CD8-positive, alpha-beta T cell (primary cell): ENCODE measurements at regions of chr5 and their contacts with region 1.

Region 1: GRCh38 chr5:139422307-139422893 is 16.9 kb downstream of the DNAJC18 start:
- DNase-seq: peak in 8 of 9 experiments; percentile 15 to 86 (median 52)
- ATAC-seq: peak; percentile 99
- H3K4me3 ChIP-seq: no peak overlapping the region
- H3K4me3 Mint-ChIP-seq: no peak overlapping the region
- H3K27ac ChIP-seq: no peak overlapping the region
- H3K27ac Mint-ChIP-seq: no peak overlapping the region
- H3K4me1 ChIP-seq: no peaks in the 10 kb centered on the region
- H3K4me1 Mint-ChIP-seq: peaks cover 5% of the 10 kb centered on the region
- H3K27me3 ChIP-seq: no peaks in the 10 kb centered on the region
- H3K27me3 Mint-ChIP-seq: no peaks in the 10 kb centered on the region
- CTCF ChIP-seq: peak; percentile 89

Region 2: DNA sequence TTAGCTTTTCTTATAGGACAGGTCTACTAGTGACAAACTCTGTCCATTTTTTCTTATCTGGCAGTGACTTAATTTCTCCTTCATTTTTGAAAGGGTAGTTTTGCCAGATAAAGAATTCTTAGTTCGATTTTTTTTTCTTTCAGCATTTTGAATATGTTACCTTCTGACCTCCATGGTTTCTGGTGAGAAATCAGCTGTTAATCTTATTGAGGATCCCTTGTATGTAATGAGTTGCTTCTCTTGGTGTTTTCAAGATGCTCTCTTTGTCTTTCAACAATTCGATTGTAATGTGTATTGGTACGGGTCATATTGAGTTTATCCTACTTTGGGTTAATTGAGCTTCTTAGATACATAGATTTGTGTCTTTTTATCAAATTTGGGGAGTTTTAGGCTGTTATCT is 68.2 kb before region 1 on chr5:
- CTCF ChIA-PET with region 1: no interaction called
- POLR2A ChIA-PET with region 1: no interaction called
- intact Hi-C with region 1: no loop called
- DNase-seq: no peak
- ATAC-seq: no peak
- H3K4me3 ChIP-seq: no peak overlapping the region
- H3K4me3 Mint-ChIP-seq: no peak overlapping the region
- H3K27ac ChIP-seq: no peak overlapping the region
- H3K27ac Mint-ChIP-seq: no peak overlapping the region
- H3K4me1 ChIP-seq: peaks cover 9% of the 10 kb centered on the region
- H3K4me1 Mint-ChIP-seq: peaks cover 62% of the 10 kb centered on the region
- H3K27me3 ChIP-seq: no peaks in the 10 kb centered on the region
- H3K27me3 Mint-ChIP-seq: no peaks in the 10 kb centered on the region
- CTCF ChIP-seq: no peak

Region 3: DNA sequence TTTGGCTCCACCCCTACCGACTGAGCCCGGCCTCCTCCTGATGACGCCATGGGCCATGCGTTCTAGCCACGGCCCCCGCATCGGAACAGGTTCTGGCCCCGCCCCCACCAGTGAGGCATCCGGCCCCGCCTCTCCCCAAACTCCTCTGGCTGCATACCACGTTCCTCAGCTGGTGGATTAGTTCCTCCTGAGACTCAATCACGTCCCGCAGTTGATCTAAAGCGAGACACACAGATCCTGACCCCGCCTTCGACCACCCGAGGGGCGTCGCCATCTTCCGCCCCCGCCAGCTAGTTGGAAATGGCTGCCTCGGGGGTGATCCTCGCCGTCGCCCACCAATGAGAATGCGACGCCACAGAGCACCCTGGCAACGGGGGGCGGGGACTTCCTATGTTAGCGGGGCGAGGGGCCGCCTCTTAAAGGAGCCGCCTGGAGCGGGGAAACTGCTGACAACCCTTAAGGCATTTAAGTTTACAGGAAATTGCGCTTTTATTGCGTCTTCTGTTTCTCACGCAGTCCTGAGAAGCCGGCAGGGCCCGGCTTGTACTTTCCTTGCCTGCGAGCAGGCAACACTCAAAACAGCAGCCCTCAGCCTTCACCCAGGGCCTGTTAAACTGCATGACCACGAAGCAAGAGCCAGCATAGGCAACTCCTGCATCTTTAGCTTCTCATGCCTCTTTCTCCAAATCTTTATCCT is 18.5 kb before region 1 on chr5 and contains the start of gene SPATA24:
- CTCF ChIA-PET with region 1: interaction called, 46 read pairs
- POLR2A ChIA-PET with region 1: interaction called, 4 read pairs
- intact Hi-C with region 1: no loop called
- DNase-seq: peak; percentile 93 to 99 (median 98)
- ATAC-seq: peak; percentile 88
- H3K4me3 ChIP-seq: peak within 1 kb of the TSS; percentile 61
- H3K4me3 Mint-ChIP-seq: peak within 1 kb of the TSS; percentile 95
- H3K27ac ChIP-seq: peak within 1 kb of the TSS; percentile 68 to 94
- H3K27ac Mint-ChIP-seq: peak within 1 kb of the TSS; percentile 99
- H3K4me1 ChIP-seq: peaks cover 16% of the 10 kb centered on the region
- H3K4me1 Mint-ChIP-seq: peaks cover 32% of the 10 kb centered on the region
- H3K27me3 ChIP-seq: no peaks in the 10 kb centered on the region
- H3K27me3 Mint-ChIP-seq: no peaks in the 10 kb centered on the region
- CTCF ChIP-seq: no peak
- total RNA-seq, gene SPATA24: 2.2 to 3.0 TPM

Region 4: GRCh38 chr5:139446956-139447779 is 24.8 kb after region 1 on chr5:
- CTCF ChIA-PET with region 1: interaction called, 64 read pairs
- POLR2A ChIA-PET with region 1: no interaction called
- intact Hi-C with region 1: no loop called
- DNase-seq: peak in 1 of 9 experiments; percentile 18
- ATAC-seq: no peak
- H3K4me3 ChIP-seq: no peak overlapping the region
- H3K4me3 Mint-ChIP-seq: no peak overlapping the region
- H3K27ac ChIP-seq: no peak overlapping the region
- H3K27ac Mint-ChIP-seq: no peak overlapping the region
- H3K4me1 ChIP-seq: peaks cover 26% of the 10 kb centered on the region
- H3K4me1 Mint-ChIP-seq: peaks cover 21% of the 10 kb centered on the region
- H3K27me3 ChIP-seq: no peaks in the 10 kb centered on the region
- H3K27me3 Mint-ChIP-seq: no peaks in the 10 kb centered on the region
- CTCF ChIP-seq: no peak

Region 5: GRCh38 chr5:139474890-139475791 is 52.7 kb after region 1 on chr5:
- CTCF ChIA-PET with region 1: interaction called, 10 read pairs
- POLR2A ChIA-PET with region 1: interaction called, 3 read pairs
- intact Hi-C with region 1: no loop called
- DNase-seq: peak in 3 of 9 experiments; percentile 25 to 60 (median 39)
- ATAC-seq: peak; percentile 66
- H3K4me3 ChIP-seq: no peak overlapping the region
- H3K4me3 Mint-ChIP-seq: peak overlapping the region; percentile 68
- H3K27ac ChIP-seq: peak overlapping the region in 1 of 2 experiments; percentile 36
- H3K27ac Mint-ChIP-seq: peak overlapping the region; percentile 82
- H3K4me1 ChIP-seq: peaks cover 67% of the 10 kb centered on the region
- H3K4me1 Mint-ChIP-seq: peaks cover 66% of the 10 kb centered on the region
- H3K27me3 ChIP-seq: no peaks in the 10 kb centered on the region
- H3K27me3 Mint-ChIP-seq: no peaks in the 10 kb centered on the region
- CTCF ChIP-seq: no peak

Region 6: DNA sequence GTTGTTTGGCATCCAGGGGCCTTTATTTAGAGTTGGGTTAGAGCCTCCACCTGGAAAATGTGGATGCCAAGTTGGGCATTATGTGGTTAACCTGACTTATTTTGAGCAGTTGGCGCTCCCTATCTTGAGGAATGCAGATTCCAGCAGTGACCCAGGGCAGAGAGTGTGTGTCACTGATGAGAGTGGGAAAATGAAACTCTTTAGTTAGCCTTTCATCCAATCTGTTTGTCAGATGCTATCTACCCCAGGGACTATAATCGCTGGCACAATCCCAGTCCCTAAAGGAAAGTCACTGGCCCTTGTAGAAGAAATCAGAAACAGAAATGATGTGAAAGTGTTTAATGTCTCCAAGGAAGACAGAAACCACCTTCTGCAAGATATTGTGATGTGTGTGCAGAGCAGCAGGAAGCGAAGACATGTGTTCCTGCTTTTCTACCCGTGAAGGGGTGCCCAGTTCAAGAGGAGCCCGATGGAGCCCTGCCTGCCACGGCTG is 70.3 kb after region 1 on chr5:
- CTCF ChIA-PET with region 1: interaction called, 19 read pairs
- POLR2A ChIA-PET with region 1: no interaction called
- intact Hi-C with region 1: no loop called
- DNase-seq: no peak
- ATAC-seq: peak; percentile 29
- H3K4me3 ChIP-seq: no peak overlapping the region
- H3K4me3 Mint-ChIP-seq: peak overlapping the region; percentile 58
- H3K27ac ChIP-seq: no peak overlapping the region
- H3K27ac Mint-ChIP-seq: no peak overlapping the region
- H3K4me1 ChIP-seq: peaks cover 9% of the 10 kb centered on the region
- H3K4me1 Mint-ChIP-seq: peaks cover 23% of the 10 kb centered on the region
- H3K27me3 ChIP-seq: no peaks in the 10 kb centered on the region
- H3K27me3 Mint-ChIP-seq: no peaks in the 10 kb centered on the region
- CTCF ChIP-seq: no peak

Region 7: DNA sequence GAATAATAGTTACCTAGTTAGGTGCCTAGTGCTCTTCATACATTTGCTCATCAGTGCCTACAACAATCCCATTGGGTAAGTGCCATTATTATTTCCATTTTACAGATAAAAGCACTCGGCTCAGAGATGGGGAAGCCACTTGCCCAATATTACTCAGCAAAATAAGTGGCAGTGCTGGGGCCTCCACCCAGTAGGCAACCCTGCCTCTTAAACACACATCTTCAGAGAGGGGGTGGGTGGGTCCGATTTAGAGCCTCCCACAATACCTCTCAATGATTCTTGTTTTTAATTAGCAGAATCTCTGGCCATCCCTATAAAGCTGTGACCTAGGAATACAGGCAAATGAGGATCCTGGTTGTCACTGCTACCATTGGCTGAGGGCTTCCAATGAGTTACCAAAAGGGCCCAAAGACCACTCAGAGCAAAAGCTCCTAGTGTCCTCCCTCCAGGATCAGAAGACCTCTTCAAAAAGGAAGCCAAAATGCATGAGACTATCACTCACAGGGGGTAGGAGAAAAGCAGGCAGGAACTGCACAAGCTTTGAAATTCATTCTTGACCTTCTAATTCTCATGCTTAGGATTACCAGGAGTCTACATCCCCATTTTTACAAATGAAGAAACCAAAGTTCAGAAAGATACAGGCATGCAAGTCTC is 102.7 kb after region 1 on chr5:
- CTCF ChIA-PET with region 1: interaction called, 473 read pairs
- POLR2A ChIA-PET with region 1: no interaction called
- intact Hi-C with region 1: no loop called
- DNase-seq: no peak
- ATAC-seq: no peak
- H3K4me3 ChIP-seq: no peak overlapping the region
- H3K4me3 Mint-ChIP-seq: no peak overlapping the region
- H3K27ac ChIP-seq: no peak overlapping the region
- H3K27ac Mint-ChIP-seq: no peak overlapping the region
- H3K4me1 ChIP-seq: no peaks in the 10 kb centered on the region
- H3K4me1 Mint-ChIP-seq: no peaks in the 10 kb centered on the region
- H3K27me3 ChIP-seq: no peaks in the 10 kb centered on the region
- H3K27me3 Mint-ChIP-seq: no peaks in the 10 kb centered on the region
- CTCF ChIP-seq: no peak

Region 8: GRCh38 chr5:139690064-139690802 is 267.8 kb after region 1 on chr5:
- CTCF ChIA-PET with region 1: interaction called, 11 read pairs
- POLR2A ChIA-PET with region 1: no interaction called
- intact Hi-C with region 1: loop called in 1 of 2 experiments (anchors 2 kb)
- DNase-seq: peak in 4 of 9 experiments; percentile 22 to 64 (median 38)
- ATAC-seq: peak; percentile 77
- H3K4me3 ChIP-seq: no peak overlapping the region
- H3K4me3 Mint-ChIP-seq: no peak overlapping the region
- H3K27ac ChIP-seq: no peak overlapping the region
- H3K27ac Mint-ChIP-seq: no peak overlapping the region
- H3K4me1 ChIP-seq: peaks cover 6% of the 10 kb centered on the region
- H3K4me1 Mint-ChIP-seq: peaks cover 19% of the 10 kb centered on the region
- H3K27me3 ChIP-seq: no peaks in the 10 kb centered on the region
- H3K27me3 Mint-ChIP-seq: no peaks in the 10 kb centered on the region
- CTCF ChIP-seq: peak; percentile 44